K562 (cell line): ENCODE measurements at regions of chr12 and their contacts with region 1.

Region 1: GRCh38 chr12:125183187-125184067 is 118.2 kb downstream of the AACS start:
- DNase-seq: peak; percentile 85 to 92 (median 90)
- ATAC-seq: peak; percentile 85
- H3K4me3 ChIP-seq: no peak overlapping the region
- H3K27ac ChIP-seq: no peak overlapping the region
- H3K4me1 ChIP-seq: peaks cover 0 to 24% of the 10 kb centered on the region in 2 experiments; a peak in 3 of 5 replicates
- H3K27me3 ChIP-seq: peaks cover 11 to 41% of the 10 kb centered on the region in 2 experiments; a peak in 4 of 5 replicates
- CTCF ChIP-seq: peak; percentile 95 to 97 (median 96)
- EP300 ChIP-seq: no peak
- POLR2A ChIP-seq: no peak
- RAD21 ChIP-seq: peak; percentile 79 to 95

Region 2: DNA sequence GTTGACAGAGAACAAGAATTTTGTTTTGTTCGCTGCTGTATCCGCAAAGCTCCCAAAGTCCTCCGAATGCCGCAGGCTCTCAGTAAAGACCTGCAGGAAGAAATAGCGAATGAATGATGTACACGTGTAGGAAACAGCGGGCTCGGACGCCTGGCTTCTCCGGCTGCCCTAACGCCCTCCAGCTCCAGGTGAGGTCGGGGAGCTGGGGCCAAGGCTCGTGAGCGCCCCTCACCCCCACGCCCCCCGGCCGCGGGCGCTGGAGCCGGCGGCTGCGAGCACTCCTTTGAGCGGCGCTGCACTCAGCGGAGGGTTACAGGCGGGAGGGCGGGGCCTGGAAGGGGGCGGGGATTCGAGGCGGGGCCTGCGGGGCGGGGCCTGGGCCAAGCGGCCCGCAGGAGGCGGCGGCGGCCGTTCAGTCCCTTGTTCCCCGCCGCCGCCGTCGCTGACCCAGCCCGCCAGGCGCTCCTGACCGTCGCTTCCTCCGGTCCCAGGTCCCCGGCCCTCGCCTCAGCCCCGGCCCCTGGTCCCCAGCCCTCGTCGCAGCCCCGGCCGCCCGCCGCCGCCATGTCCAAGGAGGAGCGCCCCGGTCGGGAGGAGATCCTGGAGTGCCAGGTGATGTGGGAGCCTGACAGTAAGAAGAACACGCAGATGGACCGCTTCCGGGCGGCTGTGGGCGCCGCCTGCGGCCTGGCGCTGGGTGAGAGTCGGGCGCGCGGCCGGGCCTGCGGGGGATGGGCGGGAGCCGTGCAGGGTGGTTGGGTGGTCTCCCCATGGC is 118.2 kb before region 1 on chr12 and contains the start of gene AACS:
- CTCF ChIA-PET with region 1: no interaction called
- POLR2A ChIA-PET with region 1: no interaction called
- in situ Hi-C with region 1: no loop called
- intact Hi-C with region 1: no loop called
- DNase-seq: peak; percentile 80 to 97 (median 96)
- ATAC-seq: peak; percentile 98
- H3K4me3 ChIP-seq: peak within 1 kb of the TSS; percentile 68
- H3K27ac ChIP-seq: no peak within 1 kb of the TSS; the same call in 1 of the 3 replicates
- H3K4me1 ChIP-seq: peaks cover 0 to 15% of the 10 kb centered on the region in 2 experiments; a peak in 3 of 5 replicates
- H3K27me3 ChIP-seq: 0 out of 5 replicates have a peak, but pooled peaks cover 0 to 4% of the 10 kb centered on the region in 2 experiments
- CTCF ChIP-seq: peak in 2 of 3 experiments; percentile 6 to 11; a peak in 2 of 6 replicates
- EP300 ChIP-seq: no peak
- POLR2A ChIP-seq: peak; percentile 58; the same call in 1 of the 2 replicates
- RAD21 ChIP-seq: no peak
- polyA plus RNA-seq, gene AACS: 2.4 TPM

Region 3: GRCh38 chr12:125114365-125115141 is 68.9 kb before region 1 on chr12:
- CTCF ChIA-PET with region 1: no interaction called
- POLR2A ChIA-PET with region 1: no interaction called
- in situ Hi-C with region 1: no loop called
- intact Hi-C with region 1: no loop called
- DNase-seq: no peak
- ATAC-seq: no peak
- H3K4me3 ChIP-seq: no peak overlapping the region
- H3K27ac ChIP-seq: no peak overlapping the region
- H3K4me1 ChIP-seq: peaks cover 3 to 12% of the 10 kb centered on the region in 2 experiments; a peak in 3 of 5 replicates
- H3K27me3 ChIP-seq: no peaks in the 10 kb centered on the region
- CTCF ChIP-seq: no peak
- EP300 ChIP-seq: no peak
- POLR2A ChIP-seq: no peak
- RAD21 ChIP-seq: no peak

Region 4: DNA sequence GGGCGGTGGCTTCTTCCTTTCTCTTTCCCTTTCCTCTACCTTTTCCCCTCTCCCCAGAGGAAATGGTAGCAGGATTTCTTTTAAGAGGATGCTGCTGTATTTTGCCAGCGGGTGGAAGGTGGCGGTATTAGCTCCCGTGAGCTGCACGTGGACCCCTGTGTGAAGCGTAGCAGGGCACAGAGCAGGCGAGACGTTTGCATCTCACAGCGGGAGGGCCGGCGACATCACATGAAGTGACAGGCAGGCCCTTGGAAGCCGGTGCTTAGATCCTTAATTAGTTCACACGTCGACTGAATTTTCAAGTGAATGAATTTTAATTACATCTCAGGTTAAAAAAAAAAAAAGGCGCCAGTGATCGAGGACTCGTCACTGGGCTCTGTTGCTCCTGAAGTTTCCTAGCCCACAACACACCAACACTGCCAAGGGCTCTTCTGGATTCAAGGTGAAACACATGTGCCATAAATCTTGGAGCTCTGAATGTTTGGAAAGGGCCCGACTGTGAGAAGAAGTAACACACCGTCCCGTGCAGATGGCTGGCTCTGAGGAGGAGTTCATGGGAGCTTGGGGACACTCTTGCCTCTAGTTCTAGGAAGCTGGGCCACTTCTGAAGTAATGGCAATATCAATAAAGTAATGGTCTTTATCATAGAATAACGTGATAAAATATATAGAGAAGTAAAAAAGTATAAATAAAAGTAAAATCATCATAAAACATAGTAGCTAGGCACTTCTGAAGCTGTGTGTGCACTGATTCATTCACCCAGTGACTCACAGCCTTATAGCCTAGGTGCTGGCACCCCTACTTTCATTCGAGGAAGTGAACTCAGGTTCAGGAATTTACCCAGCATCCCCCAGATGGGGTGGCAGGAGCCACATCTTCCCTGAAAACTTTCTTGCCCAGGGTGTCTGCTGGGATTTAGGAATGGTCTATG is 42.9 kb before region 1 on chr12:
- CTCF ChIA-PET with region 1: no interaction called
- POLR2A ChIA-PET with region 1: no interaction called
- in situ Hi-C with region 1: no loop called
- intact Hi-C with region 1: no loop called
- DNase-seq: no peak
- ATAC-seq: no peak
- H3K4me3 ChIP-seq: no peak overlapping the region
- H3K27ac ChIP-seq: no peak overlapping the region
- H3K4me1 ChIP-seq: peaks cover 0 to 8% of the 10 kb centered on the region in 2 experiments; a peak in 2 of 5 replicates
- H3K27me3 ChIP-seq: peaks cover 9 to 51% of the 10 kb centered on the region in 2 experiments; a peak in 3 of 5 replicates
- CTCF ChIP-seq: no peak
- EP300 ChIP-seq: no peak
- POLR2A ChIP-seq: no peak
- RAD21 ChIP-seq: no peak

Region 5: DNA sequence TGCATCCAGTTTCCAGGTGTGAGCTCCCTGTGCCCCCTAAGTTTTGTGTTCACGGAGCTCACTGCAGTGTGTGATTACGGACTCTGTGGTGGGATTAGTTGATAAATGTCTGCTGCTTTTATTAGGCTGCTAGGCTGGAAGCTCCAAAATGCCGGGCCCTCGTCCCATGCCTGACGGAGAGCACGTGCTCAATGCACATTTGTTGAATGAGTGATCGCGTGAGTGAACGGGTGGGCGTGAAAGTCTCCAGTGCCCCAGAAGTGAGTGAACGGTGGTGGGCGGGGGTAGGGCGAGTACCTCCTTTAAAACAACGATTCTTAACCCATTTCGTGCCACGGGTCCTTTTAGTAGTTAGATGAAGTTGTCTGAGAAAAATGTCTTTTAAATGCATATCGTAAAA is 57.3 kb after region 1 on chr12:
- CTCF ChIA-PET with region 1: no interaction called
- POLR2A ChIA-PET with region 1: interaction called, 3 read pairs
- in situ Hi-C with region 1: no loop called
- intact Hi-C with region 1: loop called (anchors 1 kb)
- DNase-seq: no peak
- ATAC-seq: no peak
- H3K4me3 ChIP-seq: no peak overlapping the region
- H3K27ac ChIP-seq: no peak overlapping the region
- H3K4me1 ChIP-seq: no peaks in the 10 kb centered on the region
- H3K27me3 ChIP-seq: peaks cover 9 to 44% of the 10 kb centered on the region in 2 experiments; a peak in 4 of 5 replicates
- CTCF ChIP-seq: no peak
- EP300 ChIP-seq: no peak
- POLR2A ChIP-seq: no peak
- RAD21 ChIP-seq: no peak

Region 6: DNA sequence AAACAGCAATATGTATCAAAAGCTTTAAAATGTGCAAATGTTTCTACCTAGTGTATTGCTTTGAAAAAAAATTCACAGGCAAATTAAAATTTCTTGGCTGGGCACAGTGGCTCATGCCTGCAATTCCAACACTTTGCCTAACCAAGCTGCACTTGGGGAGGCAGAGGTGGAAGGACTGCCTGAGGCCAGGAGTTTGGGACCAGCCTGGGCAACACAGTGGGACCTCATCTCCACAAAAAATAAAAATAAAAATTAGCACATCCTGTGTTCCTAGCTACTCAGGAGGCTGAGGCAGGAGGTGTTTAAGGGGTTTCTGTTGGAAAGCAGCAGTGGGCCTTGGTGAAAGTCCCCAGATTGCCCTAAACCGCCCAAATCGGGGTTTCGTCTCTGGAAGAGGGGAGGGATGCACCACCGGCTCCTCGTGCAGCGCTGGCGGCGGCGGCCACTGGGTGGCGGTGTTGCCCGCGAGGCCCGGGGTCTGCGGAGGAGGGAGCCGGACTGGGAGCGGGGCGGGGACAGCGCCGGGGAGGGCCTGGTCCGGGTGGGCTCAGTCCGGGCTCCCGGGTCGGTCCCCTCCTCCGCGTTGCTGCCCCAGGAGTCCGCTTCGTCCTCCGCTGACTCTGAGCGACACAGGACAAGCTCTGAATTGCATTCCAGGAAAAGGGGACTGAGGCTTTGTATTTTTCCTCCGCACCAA is 147.4 kb after region 1 on chr12:
- CTCF ChIA-PET with region 1: no interaction called
- POLR2A ChIA-PET with region 1: no interaction called
- in situ Hi-C with region 1: no loop called
- intact Hi-C with region 1: loop called (anchors 10 kb)
- DNase-seq: peak; percentile 64 to 90 (median 86)
- ATAC-seq: peak; percentile 100
- H3K4me3 ChIP-seq: peak overlapping the region; percentile 11; the same call in 1 of the 2 replicates
- H3K27ac ChIP-seq: no peak overlapping the region
- H3K4me1 ChIP-seq: peaks cover 0 to 6% of the 10 kb centered on the region in 2 experiments; a peak in 2 of 5 replicates
- H3K27me3 ChIP-seq: peaks cover 0 to 14% of the 10 kb centered on the region in 2 experiments; a peak in 2 of 5 replicates
- CTCF ChIP-seq: peak; percentile 79 to 89 (median 82)
- EP300 ChIP-seq: no peak
- POLR2A ChIP-seq: no peak
- RAD21 ChIP-seq: peak; percentile 68 to 76